ENCODE measurements at regions of chr4 and their contacts with region 1.

Region 1: GRCh38 chr4:186936496-186937375 is 213.1 kb upstream of the FAT1 start:
- DNase-seq: no peak
- ATAC-seq: no peak
- H3K4me3 ChIP-seq: peak overlapping the region in 1 of 2 donors; percentile 57
- H3K27ac ChIP-seq: no peak overlapping the region
- H3K4me1 ChIP-seq: peaks cover 4 to 5% of the 10 kb centered on the region in 2 donors
- H3K27me3 ChIP-seq: no peaks in the 10 kb centered on the region

Region 2: DNA sequence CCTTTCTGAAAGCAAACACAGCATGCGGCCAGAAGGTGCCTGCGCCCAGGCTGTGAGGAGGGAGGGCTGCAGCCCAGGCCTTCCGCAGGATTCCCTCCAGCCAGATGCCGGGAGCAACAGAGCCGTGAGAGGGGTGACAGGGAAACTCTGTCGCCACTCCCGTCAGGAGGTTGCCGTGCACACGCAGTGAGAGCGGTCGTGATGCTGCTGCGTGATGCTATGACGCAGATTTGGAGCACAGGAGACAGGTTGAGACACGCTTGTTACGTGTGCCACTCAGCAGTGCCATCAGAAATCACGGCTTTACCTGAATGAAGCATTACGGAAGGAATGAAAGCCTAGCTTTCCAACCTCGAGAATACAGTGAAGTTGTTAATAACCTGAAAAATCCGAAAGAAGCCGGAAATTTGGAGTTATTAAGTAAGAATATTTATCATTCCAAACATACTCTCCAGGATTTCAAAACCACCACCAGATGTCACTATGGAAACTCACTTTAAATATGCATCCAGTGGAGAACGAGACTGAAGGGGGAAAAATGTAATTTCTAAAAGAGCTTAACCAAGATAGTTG is 267.5 kb before region 1 on chr4:
- intact Hi-C with region 1: loop called in 1 of 2 experiments (anchors 10 kb)
- DNase-seq: no peak
- ATAC-seq: peak; percentile 79
- H3K4me3 ChIP-seq: peak overlapping the region in 1 of 2 donors; percentile 43
- H3K27ac ChIP-seq: no peak overlapping the region
- H3K4me1 ChIP-seq: no peaks in the 10 kb centered on the region
- H3K27me3 ChIP-seq: no peaks in the 10 kb centered on the region

Region 3: DNA sequence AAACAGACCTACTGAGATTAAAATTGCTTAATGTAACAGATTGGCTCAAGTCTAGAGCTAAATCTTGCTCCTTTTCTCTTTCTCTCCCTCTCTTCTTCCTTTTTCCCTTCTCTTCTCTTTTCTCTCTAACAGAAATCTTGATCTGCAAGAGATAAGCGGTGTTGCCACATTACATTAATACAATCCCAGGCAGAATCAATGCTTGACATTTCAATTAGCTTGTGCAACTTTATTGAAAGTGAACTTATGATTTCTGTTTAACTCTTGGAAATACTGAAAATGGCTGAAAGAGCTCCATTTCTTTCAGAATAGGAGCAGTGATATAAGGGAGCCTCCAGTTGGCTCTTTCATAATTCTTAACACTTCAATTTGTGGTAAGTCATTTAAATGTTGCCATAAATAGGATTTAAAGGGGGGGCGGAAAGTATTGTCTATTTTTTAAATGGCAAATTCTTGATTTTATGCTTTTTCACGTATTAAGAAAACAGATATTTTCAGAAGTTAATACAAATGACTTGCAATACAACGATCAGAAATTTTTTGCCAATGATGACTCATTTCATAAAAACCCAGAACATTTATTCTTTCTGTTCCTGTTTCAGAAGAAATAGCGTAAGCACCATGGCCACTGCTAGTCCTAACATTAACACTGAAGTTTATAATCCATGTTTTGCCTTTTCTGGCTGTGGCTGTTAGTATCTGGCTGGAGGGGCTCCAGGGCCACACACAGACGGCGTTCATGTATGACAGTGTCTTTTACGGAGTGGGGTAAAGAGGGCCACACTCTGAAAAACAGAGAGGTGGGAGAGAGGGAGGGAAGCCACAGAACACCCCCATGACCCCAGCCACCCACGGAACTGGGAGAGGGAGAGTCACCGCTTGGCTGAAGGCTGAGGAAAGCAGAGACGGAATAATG is 97.4 kb before region 1 on chr4:
- intact Hi-C with region 1: loop called in 1 of 2 experiments (anchors 10 kb)
- DNase-seq: peak; percentile 62 to 79
- ATAC-seq: peak; percentile 75
- H3K4me3 ChIP-seq: no peak overlapping the region
- H3K27ac ChIP-seq: peak overlapping the region in 1 of 2 donors; percentile 55
- H3K4me1 ChIP-seq: peaks cover 1 to 3% of the 10 kb centered on the region in 2 donors
- H3K27me3 ChIP-seq: no peaks in the 10 kb centered on the region

Region 4: GRCh38 chr4:186900232-186900900 is 36.4 kb before region 1 on chr4:
- intact Hi-C with region 1: no loop called
- DNase-seq: no peak
- ATAC-seq: peak; percentile 67
- H3K4me3 ChIP-seq: no peak overlapping the region
- H3K27ac ChIP-seq: no peak overlapping the region
- H3K4me1 ChIP-seq: peaks cover 0 to 4% of the 10 kb centered on the region in 2 donors
- H3K27me3 ChIP-seq: no peaks in the 10 kb centered on the region

Region 5: DNA sequence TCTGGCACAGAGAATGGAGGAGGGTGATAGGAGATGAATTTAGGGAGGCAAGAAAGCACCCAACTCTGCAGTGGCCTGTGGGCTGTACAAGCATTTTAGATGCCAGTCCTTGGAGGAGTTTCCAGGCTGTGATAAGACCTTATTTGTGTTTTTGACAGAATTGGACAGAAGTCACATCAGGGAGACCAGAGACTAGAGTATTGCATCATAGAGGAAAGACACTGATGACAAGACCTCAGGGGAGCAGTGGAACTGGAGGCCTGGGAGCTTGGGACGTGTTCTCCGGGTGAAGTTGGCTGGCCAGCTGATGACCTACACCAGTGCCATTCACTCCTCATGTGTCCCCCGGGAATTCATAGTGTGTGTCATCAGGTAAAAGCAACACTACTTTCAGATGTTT is 774.9 kb after region 1 on chr4:
- intact Hi-C with region 1: no loop called
- DNase-seq: no peak
- ATAC-seq: no peak
- H3K4me3 ChIP-seq: no peak overlapping the region
- H3K27ac ChIP-seq: no peak overlapping the region
- H3K4me1 ChIP-seq: no peaks in the 10 kb centered on the region
- H3K27me3 ChIP-seq: no peaks in the 10 kb centered on the region

Measured in aorta (tissue), 5 donors.